Activated CD4-positive, alpha-beta T cell treated with anti-CD3 and anti-CD28 coated beads, Interleukin-2, amount 10 ng/mL, durations not matched to agents 24 days and 14 days (primary cell): ENCODE measurements at regions of chr11 and their contacts with region 1.

Region 1: GRCh38 chr11:108222686-108223448 is at the start of gene ATM:
- DNase-seq: peak; percentile 99
- H3K4me3 Mint-ChIP-seq: no peak within 1 kb of the TSS
- H3K27ac Mint-ChIP-seq: no peak within 1 kb of the TSS
- H3K4me1 Mint-ChIP-seq: peaks cover 56% of the 10 kb centered on the region
- H3K27me3 Mint-ChIP-seq: no peaks in the 10 kb centered on the region
- total RNA-seq, gene ATM: 37.6 and 42.5 TPM in 2 replicates

Region 2: DNA sequence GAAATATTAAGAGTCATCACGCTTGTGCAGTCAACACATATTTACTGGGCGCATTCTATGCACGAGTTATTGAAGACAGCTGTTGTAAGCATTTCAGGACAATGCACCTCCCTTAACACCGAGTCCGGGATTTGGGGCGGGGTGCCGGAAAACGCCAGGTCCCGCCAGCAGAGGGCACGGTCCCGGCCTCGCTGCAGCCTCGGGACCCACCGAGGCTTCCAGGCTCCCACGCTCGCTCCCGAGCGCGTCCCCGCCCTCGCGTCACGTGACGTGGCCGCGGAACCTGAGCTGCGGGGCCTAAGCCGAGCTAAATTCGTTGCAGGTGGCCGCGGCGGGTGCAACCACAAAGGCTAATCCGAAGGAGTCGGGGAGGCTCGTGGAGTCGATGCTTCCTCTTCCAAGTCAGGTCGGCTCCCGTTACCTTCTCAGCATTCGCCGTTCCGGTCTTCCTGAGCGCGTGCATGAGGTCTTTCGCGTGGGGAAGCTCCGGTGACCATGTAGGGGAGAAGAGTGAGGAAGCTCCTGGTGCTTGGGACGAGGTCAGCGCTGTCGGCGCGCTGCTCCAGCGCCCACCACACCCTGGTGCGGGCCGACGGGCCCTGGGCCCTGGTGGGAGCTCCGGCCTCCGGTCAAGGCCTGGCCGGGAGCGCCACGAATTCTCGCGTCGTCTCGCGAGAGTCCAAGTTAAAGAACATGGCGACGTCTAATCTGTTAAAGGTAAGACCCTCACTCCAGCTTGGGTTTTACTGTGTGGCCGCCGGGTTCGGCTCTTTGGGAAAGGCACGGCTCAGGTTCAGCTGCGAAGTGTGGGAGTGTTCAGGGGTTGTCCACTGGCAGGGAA is 214.0 kb before region 1 on chr11 and contains the start of gene CUL5:
- intact Hi-C with region 1: loop called (anchors 5 kb)
- DNase-seq: peak; percentile 97
- H3K4me3 Mint-ChIP-seq: peak within 1 kb of the TSS; percentile 98
- H3K27ac Mint-ChIP-seq: peak within 1 kb of the TSS; percentile 97
- H3K4me1 Mint-ChIP-seq: peaks cover 18% of the 10 kb centered on the region
- H3K27me3 Mint-ChIP-seq: no peaks in the 10 kb centered on the region
- total RNA-seq, gene CUL5: 38.0 and 40.1 TPM in 2 replicates

Region 3: DNA sequence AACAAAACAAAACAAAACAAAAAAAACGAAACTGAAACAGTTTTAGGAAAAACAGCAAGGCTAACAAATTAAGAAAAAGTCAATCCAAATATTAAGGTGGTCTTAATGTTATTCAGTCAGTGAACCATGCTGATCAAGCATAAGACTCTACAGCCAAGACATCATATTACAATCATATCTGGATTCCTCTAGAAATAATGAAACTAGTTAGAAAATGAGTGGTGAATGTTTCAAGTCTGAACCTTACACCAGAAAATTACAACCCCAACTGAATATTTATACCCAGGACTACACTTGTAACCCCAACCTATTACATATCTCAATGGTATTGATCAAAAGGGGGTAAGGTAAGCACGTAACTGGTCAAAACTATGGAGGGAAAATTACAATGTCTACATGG is 52.7 kb before region 1 on chr11:
- intact Hi-C with region 1: loop called (anchors 2 kb)
- DNase-seq: no peak
- H3K4me3 Mint-ChIP-seq: peak overlapping the region; percentile 1
- H3K27ac Mint-ChIP-seq: no peak overlapping the region
- H3K4me1 Mint-ChIP-seq: peaks cover 12% of the 10 kb centered on the region
- H3K27me3 Mint-ChIP-seq: no peaks in the 10 kb centered on the region

Region 4: DNA sequence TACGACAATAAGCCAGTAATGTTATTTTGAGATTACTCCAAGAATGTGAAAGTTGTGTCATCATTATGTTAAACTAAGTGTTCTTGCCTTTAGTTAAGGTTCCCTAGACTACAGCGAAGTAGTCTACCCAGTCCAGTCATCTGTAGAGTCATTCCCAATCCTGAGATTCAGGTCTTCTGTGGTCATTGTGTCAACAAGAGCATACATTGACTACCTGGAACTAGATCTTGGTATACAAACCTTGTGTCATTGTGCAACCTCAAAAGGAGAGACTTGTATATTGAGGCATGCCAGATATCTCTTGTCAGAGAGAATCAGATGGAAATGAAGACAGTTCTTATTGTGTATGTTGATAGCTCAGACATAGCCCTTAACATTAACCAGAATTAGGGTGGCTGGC is 115.9 kb after region 1 on chr11:
- intact Hi-C with region 1: no loop called
- DNase-seq: no peak
- H3K4me3 Mint-ChIP-seq: no peak overlapping the region
- H3K27ac Mint-ChIP-seq: no peak overlapping the region
- H3K4me1 Mint-ChIP-seq: peaks cover 6% of the 10 kb centered on the region
- H3K27me3 Mint-ChIP-seq: no peaks in the 10 kb centered on the region

Region 5: GRCh38 chr11:108467091-108467823 is 244.4 kb after region 1 on chr11 and contains the start of gene C11orf65:
- intact Hi-C with region 1: loop called (anchors 1 kb)
- DNase-seq: peak; percentile 99
- H3K4me3 Mint-ChIP-seq: peak within 1 kb of the TSS; percentile 100
- H3K27ac Mint-ChIP-seq: peak within 1 kb of the TSS; percentile 100
- H3K4me1 Mint-ChIP-seq: peaks cover 13% of the 10 kb centered on the region
- H3K27me3 Mint-ChIP-seq: no peaks in the 10 kb centered on the region
- total RNA-seq, gene C11orf65: 0.30 and 0.40 TPM in 2 replicates

Region 6: GRCh38 chr11:108620958-108621772 is 398.3 kb after region 1 on chr11:
- intact Hi-C with region 1: loop called (anchors 2 kb)
- DNase-seq: no peak
- H3K4me3 Mint-ChIP-seq: no peak overlapping the region
- H3K27ac Mint-ChIP-seq: peak overlapping the region; percentile 3
- H3K4me1 Mint-ChIP-seq: peaks cover 17% of the 10 kb centered on the region
- H3K27me3 Mint-ChIP-seq: peaks cover 17% of the 10 kb centered on the region